PC-9 (cell line): ENCODE measurements at regions of chr7 and their contacts with region 1.

Region 1: GRCh38 chr7:116443101-116443523 is 56.4 kb upstream of the CAV2 start:
- DNase-seq: peak; percentile 46 to 95
- H3K4me3 ChIP-seq: peak overlapping the region; percentile 65; the same call in 1 of the 2 replicates
- H3K27ac ChIP-seq: peak overlapping the region; percentile 100
- H3K4me1 ChIP-seq: peaks cover 58% of the 10 kb centered on the region
- H3K27me3 ChIP-seq: no peaks in the 10 kb centered on the region
- CTCF ChIP-seq: no peak

Region 2: DNA sequence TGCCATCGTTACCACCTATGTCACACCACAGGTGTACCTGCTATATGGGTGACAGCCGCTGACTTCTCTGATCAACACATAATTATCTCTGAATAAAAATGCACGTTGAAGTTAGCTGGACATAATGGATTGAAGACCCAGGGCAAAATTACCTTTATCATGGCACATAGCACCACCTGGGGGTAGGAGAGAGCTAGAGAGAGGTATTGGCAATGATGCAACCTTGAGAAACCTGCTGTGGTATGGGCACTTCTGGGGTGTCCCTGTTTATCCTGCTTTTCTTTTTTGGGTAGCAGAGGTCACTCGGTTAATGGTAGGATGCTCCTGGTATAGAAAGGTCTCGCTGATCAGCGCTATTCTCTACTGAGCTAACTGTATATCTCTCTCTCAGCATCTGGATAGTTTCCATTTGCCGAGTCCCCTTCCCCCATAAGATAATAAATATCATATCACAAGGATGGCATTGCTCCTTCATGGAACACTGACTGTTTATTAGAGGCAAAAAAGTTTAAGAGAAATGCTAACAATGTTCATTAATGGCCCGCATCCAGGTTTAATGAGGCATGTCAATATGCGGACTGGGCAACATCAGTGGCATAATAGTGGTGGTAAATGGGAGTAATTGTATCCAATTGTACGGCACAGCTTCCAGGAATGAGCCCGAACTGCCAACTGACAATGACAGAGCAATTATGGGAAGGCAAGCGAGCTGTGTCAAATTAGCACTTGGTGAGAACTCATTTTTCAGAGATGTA is 735.7 kb before region 1 on chr7:
- CTCF ChIA-PET with region 1: no interaction called
- POLR2A ChIA-PET with region 1: no interaction called
- intact Hi-C with region 1: no loop called
- DNase-seq: peak in 1 of 2 experiments; percentile 31
- H3K4me3 ChIP-seq: no peak overlapping the region
- H3K27ac ChIP-seq: no peak overlapping the region
- H3K4me1 ChIP-seq: no peaks in the 10 kb centered on the region
- H3K27me3 ChIP-seq: no peaks in the 10 kb centered on the region
- CTCF ChIP-seq: peak; percentile 45; the same call in 1 of the 2 replicates

Region 3: DNA sequence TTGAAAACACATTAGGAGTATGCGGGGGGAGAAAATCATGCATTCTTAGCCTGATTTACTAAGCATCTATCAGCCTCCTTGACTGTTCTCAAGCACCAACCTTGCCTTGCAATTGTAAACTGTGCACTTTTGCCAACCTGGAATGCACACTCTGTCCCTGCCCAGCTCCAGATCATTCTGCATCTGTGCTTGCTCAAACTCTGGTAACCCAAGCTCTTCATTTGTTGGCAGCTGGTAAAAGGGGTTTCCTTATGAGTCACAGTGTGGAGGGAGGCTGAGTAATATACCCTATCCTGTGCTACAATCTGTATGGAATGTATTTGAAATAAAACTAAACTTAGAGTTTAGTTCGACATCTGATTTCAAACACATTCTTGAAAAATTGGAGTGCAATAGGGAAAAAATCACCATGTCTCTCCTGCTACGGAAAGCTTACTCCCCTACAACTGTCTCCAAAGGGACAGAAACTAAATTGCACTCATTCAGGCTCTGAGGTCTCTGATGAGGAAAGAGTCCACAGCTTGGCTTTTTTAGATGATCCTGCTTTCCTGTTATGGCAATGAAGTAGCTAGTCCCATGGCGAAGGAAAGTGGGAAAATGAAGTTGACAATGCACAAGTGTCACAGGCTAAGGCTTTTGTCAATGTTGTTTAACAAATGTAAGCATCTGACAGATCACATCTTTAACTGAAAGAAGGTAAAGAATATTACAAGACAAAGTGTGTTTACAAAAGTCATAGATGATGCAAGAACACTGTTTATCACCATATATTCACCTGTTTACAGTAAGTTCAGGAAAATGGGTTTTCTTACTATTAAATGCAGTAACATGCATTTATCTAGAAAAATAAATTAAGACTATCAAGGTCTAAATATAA is 170.9 kb before region 1 on chr7:
- CTCF ChIA-PET with region 1: no interaction called
- POLR2A ChIA-PET with region 1: no interaction called
- intact Hi-C with region 1: loop called (anchors 2 kb)
- DNase-seq: peak; percentile 80 to 95
- H3K4me3 ChIP-seq: peak overlapping the region; percentile 32; the same call in 1 of the 2 replicates
- H3K27ac ChIP-seq: peak overlapping the region; percentile 93
- H3K4me1 ChIP-seq: peaks cover 49% of the 10 kb centered on the region
- H3K27me3 ChIP-seq: no peaks in the 10 kb centered on the region
- CTCF ChIP-seq: no peak

Region 4: GRCh38 chr7:116395125-116395791 is 47.9 kb before region 1 on chr7:
- CTCF ChIA-PET with region 1: no interaction called
- POLR2A ChIA-PET with region 1: interaction called, 7 read pairs
- intact Hi-C with region 1: loop called (anchors 1 kb)
- DNase-seq: peak; percentile 85 to 90
- H3K4me3 ChIP-seq: peak overlapping the region; percentile 37; the same call in 1 of the 2 replicates
- H3K27ac ChIP-seq: peak overlapping the region; percentile 96
- H3K4me1 ChIP-seq: peaks cover 29% of the 10 kb centered on the region
- H3K27me3 ChIP-seq: no peaks in the 10 kb centered on the region
- CTCF ChIP-seq: no peak

Region 5: DNA sequence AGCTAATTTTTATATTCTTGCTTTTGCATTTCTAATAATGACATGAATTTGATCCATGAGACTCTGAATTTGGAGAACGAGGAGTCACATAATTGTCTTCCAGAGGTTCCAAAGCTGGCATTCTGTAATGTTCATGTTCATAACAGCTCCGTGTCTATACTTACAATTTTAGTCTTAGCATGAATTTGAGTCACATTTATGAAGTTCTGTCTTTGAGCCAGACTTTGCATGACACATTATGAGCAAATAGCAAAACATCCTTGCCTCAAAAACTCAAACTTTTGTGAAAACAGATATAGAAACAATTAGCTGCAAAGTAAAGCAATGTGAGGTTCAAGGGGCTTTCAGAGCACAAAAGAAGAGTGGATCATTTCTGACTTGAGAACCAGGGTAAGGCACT is 11.9 kb after region 1 on chr7:
- CTCF ChIA-PET with region 1: interaction called, 10 read pairs
- POLR2A ChIA-PET with region 1: no interaction called
- intact Hi-C with region 1: loop called (anchors 2 kb)
- DNase-seq: no peak
- H3K4me3 ChIP-seq: no peak overlapping the region
- H3K27ac ChIP-seq: no peak overlapping the region
- H3K4me1 ChIP-seq: 0 out of 2 replicates have a peak, but pooled peaks cover 4% of the 10 kb centered on the region
- H3K27me3 ChIP-seq: no peaks in the 10 kb centered on the region
- CTCF ChIP-seq: no peak

Region 6: GRCh38 chr7:116499168-116500077 is 56.3 kb after region 1 on chr7 and contains the start of gene CAV2:
- CTCF ChIA-PET with region 1: no interaction called
- POLR2A ChIA-PET with region 1: interaction called, 14 read pairs
- intact Hi-C with region 1: loop called (anchors 1 kb)
- DNase-seq: peak; percentile 88 to 95
- H3K4me3 ChIP-seq: peak within 1 kb of the TSS; percentile 89
- H3K27ac ChIP-seq: peak within 1 kb of the TSS; percentile 81
- H3K4me1 ChIP-seq: peaks cover 35% of the 10 kb centered on the region
- H3K27me3 ChIP-seq: no peaks in the 10 kb centered on the region
- CTCF ChIP-seq: no peak
- total RNA-seq, gene CAV2: 260 and 296 TPM in 2 replicates

Region 7: DNA sequence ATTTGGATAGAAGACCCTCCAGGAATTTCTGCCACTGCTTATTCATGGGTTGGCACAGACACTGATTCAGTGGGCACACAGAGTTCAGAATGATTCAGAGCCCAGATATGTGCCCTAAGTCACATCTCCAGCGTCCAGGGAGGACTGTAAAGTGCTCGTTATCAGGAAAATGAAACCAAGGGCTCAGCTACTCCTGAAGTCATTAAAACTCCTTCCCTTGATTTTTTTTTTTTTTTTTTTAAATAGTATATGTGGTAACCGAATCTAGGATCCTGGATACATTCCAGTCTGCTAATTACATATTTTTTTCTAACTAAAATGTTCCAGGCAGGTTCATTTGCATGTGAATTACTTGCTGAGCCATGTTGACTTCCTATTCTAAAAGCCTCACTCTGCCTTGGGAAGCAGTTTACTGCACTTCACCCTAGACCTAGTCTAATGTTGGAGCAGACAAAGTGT is 263.6 kb after region 1 on chr7:
- CTCF ChIA-PET with region 1: no interaction called
- POLR2A ChIA-PET with region 1: no interaction called
- intact Hi-C with region 1: loop called (anchors 5 kb)
- DNase-seq: peak; percentile 71 to 80
- H3K4me3 ChIP-seq: peak overlapping the region; percentile 43; the same call in 1 of the 2 replicates
- H3K27ac ChIP-seq: peak overlapping the region; percentile 82
- H3K4me1 ChIP-seq: peaks cover 67% of the 10 kb centered on the region
- H3K27me3 ChIP-seq: no peaks in the 10 kb centered on the region
- CTCF ChIP-seq: no peak